ENCODE measurements at regions of chr1 and their contacts with region 1.

Region 1: GRCh38 chr1:75203415-75204277 is 69.5 kb downstream of the LHX8 start:
- DNase-seq: peak; percentile 2
- ATAC-seq: peak; percentile 61
- H3K4me3 Mint-ChIP-seq: no peak overlapping the region
- H3K27ac Mint-ChIP-seq: no peak overlapping the region
- H3K4me1 Mint-ChIP-seq: no peaks in the 10 kb centered on the region
- H3K27me3 Mint-ChIP-seq: no peaks in the 10 kb centered on the region
- CTCF ChIP-seq: peak; percentile 72

Region 2: DNA sequence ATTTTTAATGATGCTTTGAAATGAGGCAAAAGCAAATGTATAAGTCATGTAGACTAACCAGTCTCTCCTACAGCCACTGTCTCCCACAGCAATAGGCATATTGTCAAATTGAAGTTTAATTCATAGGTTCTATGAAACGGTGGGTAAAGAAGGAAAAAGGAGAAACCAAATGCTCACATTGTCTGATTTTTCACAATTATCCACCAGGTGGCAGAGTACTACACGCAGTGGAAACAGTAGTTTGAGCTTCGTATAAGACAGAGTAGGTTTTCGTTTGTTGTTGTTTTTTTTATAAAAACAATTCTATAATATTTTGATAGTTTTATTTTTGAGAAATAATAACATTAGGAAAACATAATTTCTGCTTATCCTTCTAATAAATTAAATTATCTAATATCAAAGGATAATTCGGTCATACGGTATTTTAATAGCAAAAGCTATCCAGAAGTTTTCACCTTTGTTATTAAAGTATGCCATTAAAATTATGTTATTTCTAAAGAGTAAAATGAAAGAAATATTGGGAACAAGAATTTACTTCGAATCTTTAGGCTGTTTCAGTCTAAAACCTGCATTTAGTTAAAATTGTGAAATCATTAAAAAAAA is 431.6 kb before region 1 on chr1:
- CTCF ChIA-PET with region 1: interaction called, 9 read pairs
- POLR2A ChIA-PET with region 1: no interaction called
- intact Hi-C with region 1: loop called (anchors 1 kb)
- DNase-seq: peak; percentile 27
- ATAC-seq: peak; percentile 69
- H3K4me3 Mint-ChIP-seq: no peak overlapping the region
- H3K27ac Mint-ChIP-seq: no peak overlapping the region
- H3K4me1 Mint-ChIP-seq: no peaks in the 10 kb centered on the region
- H3K27me3 Mint-ChIP-seq: peaks cover 9% of the 10 kb centered on the region
- CTCF ChIP-seq: peak; percentile 69

Measured in activated CD8-positive, alpha-beta T cell treated with anti-CD3 and anti-CD28 coated beads for 36 hours (primary cell).